ENCODE measurements at regions of chr18 and their contacts with region 1.

Region 1: GRCh38 chr18:24176727-24177416 is 38.0 kb downstream of the CABYR start:
- DNase-seq: peak; percentile 40 to 53
- ATAC-seq: peak; percentile 77 to 78
- H3K4me3 ChIP-seq: no peak overlapping the region
- H3K27ac ChIP-seq: peak overlapping the region in 2 of 4 donors; percentile 1 to 22
- H3K4me1 ChIP-seq: peaks cover 6 to 7% of the 10 kb centered on the region in 2 donors
- H3K27me3 ChIP-seq: no peaks in the 10 kb centered on the region
- CTCF ChIP-seq: peak; percentile 71 to 85 (median 78)
- POLR2A ChIP-seq: no peak

Region 2: GRCh38 chr18:24219561-24220317 is 42.9 kb after region 1 on chr18:
- in situ Hi-C with region 1: loop called in 1 of 4 experiments (anchors 10 kb)
- intact Hi-C with region 1: loop called (anchors 1 kb)
- DNase-seq: peak; percentile 78 to 84
- ATAC-seq: peak; percentile 96 to 100
- H3K4me3 ChIP-seq: no peak overlapping the region
- H3K27ac ChIP-seq: peak overlapping the region; percentile 63 to 83 (median 75)
- H3K4me1 ChIP-seq: peaks cover 39 to 49% of the 10 kb centered on the region in 2 donors
- H3K27me3 ChIP-seq: no peaks in the 10 kb centered on the region
- CTCF ChIP-seq: no peak
- POLR2A ChIP-seq: no peak

Measured in gastrocnemius medialis (tissue), 4 donors.